ENCODE measurements at regions of chr1 and their contacts with region 1.

Region 1: GRCh38 chr1:25796811-25797458 is 3.1 kb upstream of the SELENON start:
- DNase-seq: no peak
- ATAC-seq: peak; percentile 70
- H3K4me3 ChIP-seq: no peak overlapping the region
- H3K27ac ChIP-seq: no peak overlapping the region
- H3K4me1 ChIP-seq: peaks cover 2% of the 10 kb centered on the region
- H3K27me3 ChIP-seq: no peaks in the 10 kb centered on the region; a peak in 1 of 4 replicates
- CTCF ChIP-seq: peak; percentile 71 to 82 (median 77)
- EP300 ChIP-seq: no peak
- POLR2A ChIP-seq: no peak
- RAD21 ChIP-seq: peak; percentile 86

Region 2: DNA sequence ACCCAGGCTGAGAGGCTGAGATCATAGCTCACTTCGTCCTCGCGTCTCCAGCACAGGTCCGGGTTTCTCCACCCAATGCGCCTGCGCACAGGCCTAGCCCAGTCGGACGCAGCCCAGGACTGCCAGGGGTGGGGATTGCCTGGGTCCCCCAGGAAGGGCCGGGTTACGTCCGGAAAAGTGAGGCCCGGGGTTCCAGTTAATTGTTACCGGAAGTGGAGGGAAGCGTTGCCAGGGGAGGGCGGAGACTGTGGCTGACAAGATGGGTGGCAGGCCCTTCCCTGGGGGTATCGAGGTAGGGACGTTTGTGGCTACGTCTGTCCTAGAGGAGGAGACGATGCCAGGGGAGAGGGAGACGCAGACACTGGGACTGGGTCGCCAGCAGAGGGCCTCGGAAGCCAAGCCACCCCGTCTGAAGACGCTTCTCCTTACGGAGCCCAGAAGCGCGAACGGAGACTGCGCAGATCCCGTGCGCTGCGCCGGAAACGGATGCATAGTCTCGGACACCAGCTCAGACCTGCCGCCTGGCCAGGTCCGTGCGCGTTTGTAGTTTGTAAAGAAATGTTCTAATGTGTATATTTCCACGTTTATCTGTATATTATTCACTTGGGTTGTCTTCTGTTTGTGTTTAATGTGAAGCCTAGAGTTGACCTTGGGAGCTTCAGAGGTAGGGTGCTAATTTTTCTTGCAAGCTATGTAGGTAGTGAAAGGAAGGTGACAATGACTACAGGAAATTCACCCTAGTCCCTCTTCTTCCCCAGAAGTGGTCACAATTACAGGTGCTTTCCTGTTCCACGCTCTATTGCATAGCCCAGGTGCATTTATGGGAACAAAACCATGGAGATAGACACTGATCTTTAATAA is 557.0 kb before region 1 on chr1:
- CTCF ChIA-PET with region 1: no interaction called
- POLR2A ChIA-PET with region 1: no interaction called
- RAD21 ChIA-PET with region 1: no interaction called
- SMC1A ChIA-PET with region 1: no interaction called
- in situ Hi-C with region 1: no loop called
- intact Hi-C with region 1: loop called (anchors 10 kb)
- DNase-seq: peak; percentile 93
- ATAC-seq: peak; percentile 88
- H3K4me3 ChIP-seq: peak overlapping the region; percentile 55
- H3K27ac ChIP-seq: peak overlapping the region; percentile 88
- H3K4me1 ChIP-seq: peaks cover 22% of the 10 kb centered on the region
- H3K27me3 ChIP-seq: no peaks in the 10 kb centered on the region
- CTCF ChIP-seq: peak; percentile 67 to 82 (median 68)
- EP300 ChIP-seq: no peak
- POLR2A ChIP-seq: peak; percentile 83
- RAD21 ChIP-seq: peak; percentile 39; the same call in 1 of the 2 replicates

Region 3: GRCh38 chr1:25503551-25504426 is 293.1 kb before region 1 on chr1:
- CTCF ChIA-PET with region 1: interaction called, 5 read pairs
- POLR2A ChIA-PET with region 1: no interaction called
- RAD21 ChIA-PET with region 1: interaction called, 4 read pairs
- SMC1A ChIA-PET with region 1: interaction called, 3 read pairs
- in situ Hi-C with region 1: no loop called
- intact Hi-C with region 1: loop called (anchors 5 kb)
- DNase-seq: no peak
- ATAC-seq: peak; percentile 98
- H3K4me3 ChIP-seq: no peak overlapping the region
- H3K27ac ChIP-seq: no peak overlapping the region
- H3K4me1 ChIP-seq: no peaks in the 10 kb centered on the region
- H3K27me3 ChIP-seq: no peaks in the 10 kb centered on the region
- CTCF ChIP-seq: peak; percentile 56 to 72 (median 71)
- EP300 ChIP-seq: no peak
- POLR2A ChIP-seq: no peak
- RAD21 ChIP-seq: peak; percentile 40; the same call in 1 of the 2 replicates

Region 4: GRCh38 chr1:25675729-25676476 is 121.0 kb before region 1 on chr1:
- CTCF ChIA-PET with region 1: interaction called, 3 read pairs
- POLR2A ChIA-PET with region 1: no interaction called
- RAD21 ChIA-PET with region 1: no interaction called
- SMC1A ChIA-PET with region 1: no interaction called
- in situ Hi-C with region 1: no loop called
- intact Hi-C with region 1: loop called (anchors 5 kb)
- DNase-seq: peak; percentile 93
- ATAC-seq: peak; percentile 98
- H3K4me3 ChIP-seq: no peak overlapping the region
- H3K27ac ChIP-seq: no peak overlapping the region
- H3K4me1 ChIP-seq: peaks cover 21% of the 10 kb centered on the region
- H3K27me3 ChIP-seq: peaks cover 3 to 15% of the 10 kb centered on the region in 2 experiments
- CTCF ChIP-seq: no peak
- EP300 ChIP-seq: peak; percentile 93 to 97
- POLR2A ChIP-seq: no peak
- RAD21 ChIP-seq: no peak

Region 5: DNA sequence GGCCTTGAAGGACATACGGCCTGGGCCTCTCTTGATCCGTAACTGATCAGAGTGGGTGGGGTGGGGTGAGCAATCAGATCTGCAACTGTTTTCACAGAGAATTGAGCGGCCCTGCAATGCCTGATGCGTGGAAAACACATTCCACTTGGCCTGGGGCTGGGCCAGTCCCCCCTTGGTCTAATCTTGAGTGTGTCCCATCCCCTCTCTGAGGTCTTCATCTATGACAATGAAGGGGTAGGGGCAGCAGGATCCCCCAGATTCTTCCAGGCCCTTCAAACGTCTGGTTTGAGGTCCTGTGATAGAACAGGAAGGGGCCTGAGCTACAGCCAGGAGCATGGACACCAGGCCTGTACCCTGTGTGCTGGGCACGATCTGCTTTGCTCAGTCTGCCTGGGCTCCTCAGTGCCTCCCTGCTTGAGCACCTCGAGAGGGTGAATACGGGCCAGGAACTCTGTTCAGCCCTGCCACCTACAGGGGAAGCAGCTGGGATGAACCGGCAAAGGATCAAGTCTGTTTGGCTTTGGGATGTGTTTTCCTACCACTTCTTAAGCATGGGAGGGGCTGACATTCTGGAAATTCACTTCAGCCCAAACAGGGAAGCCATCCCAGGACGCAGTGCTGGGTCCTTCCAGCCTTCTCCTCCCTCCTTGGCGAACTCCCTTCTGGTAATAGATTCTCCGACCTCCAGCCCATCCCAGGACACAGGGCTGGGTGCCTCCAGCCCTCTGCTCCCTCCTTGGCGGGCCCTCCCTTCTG is 52.9 kb before region 1 on chr1:
- CTCF ChIA-PET with region 1: no interaction called
- POLR2A ChIA-PET with region 1: no interaction called
- RAD21 ChIA-PET with region 1: no interaction called
- SMC1A ChIA-PET with region 1: no interaction called
- in situ Hi-C with region 1: loop called (anchors 5 kb)
- intact Hi-C with region 1: no loop called
- DNase-seq: no peak
- ATAC-seq: peak; percentile 62
- H3K4me3 ChIP-seq: no peak overlapping the region
- H3K27ac ChIP-seq: no peak overlapping the region
- H3K4me1 ChIP-seq: no peaks in the 10 kb centered on the region
- H3K27me3 ChIP-seq: peaks cover 9 to 10% of the 10 kb centered on the region in 2 experiments
- CTCF ChIP-seq: peak; percentile 11 to 38 (median 12); a peak in 4 of 6 replicates
- EP300 ChIP-seq: no peak
- POLR2A ChIP-seq: no peak
- RAD21 ChIP-seq: no peak

Measured in GM12878 (cell line).